Vagina (tissue), 2 donors: ENCODE measurements at regions of chr1 and their contacts with region 1.

Region 1: GRCh38 chr1:16351994-16352841 is at the start of gene FBXO42:
- DNase-seq: no peak
- H3K4me3 ChIP-seq: peak within 1 kb of the TSS; percentile 85 to 88
- H3K27ac ChIP-seq: peak within 1 kb of the TSS; percentile 94
- H3K4me1 ChIP-seq: peaks cover 37% of the 10 kb centered on the region
- H3K27me3 ChIP-seq: no peaks in the 10 kb centered on the region
- CTCF ChIP-seq: peak in 2 of 3 experiments; percentile 13 to 26
- POLR2A ChIP-seq: peak; percentile 60 to 94
- total RNA-seq, gene FBXO42: 24.8 TPM

Region 2: GRCh38 chr1:15994590-15995351 is 357.4 kb before region 1 on chr1:
- intact Hi-C with region 1: no loop called
- DNase-seq: no peak
- H3K4me3 ChIP-seq: no peak overlapping the region
- H3K27ac ChIP-seq: no peak overlapping the region
- H3K4me1 ChIP-seq: no peaks in the 10 kb centered on the region
- H3K27me3 ChIP-seq: no peaks in the 10 kb centered on the region
- CTCF ChIP-seq: peak; percentile 72 to 83 (median 77)
- POLR2A ChIP-seq: no peak

Region 3: DNA sequence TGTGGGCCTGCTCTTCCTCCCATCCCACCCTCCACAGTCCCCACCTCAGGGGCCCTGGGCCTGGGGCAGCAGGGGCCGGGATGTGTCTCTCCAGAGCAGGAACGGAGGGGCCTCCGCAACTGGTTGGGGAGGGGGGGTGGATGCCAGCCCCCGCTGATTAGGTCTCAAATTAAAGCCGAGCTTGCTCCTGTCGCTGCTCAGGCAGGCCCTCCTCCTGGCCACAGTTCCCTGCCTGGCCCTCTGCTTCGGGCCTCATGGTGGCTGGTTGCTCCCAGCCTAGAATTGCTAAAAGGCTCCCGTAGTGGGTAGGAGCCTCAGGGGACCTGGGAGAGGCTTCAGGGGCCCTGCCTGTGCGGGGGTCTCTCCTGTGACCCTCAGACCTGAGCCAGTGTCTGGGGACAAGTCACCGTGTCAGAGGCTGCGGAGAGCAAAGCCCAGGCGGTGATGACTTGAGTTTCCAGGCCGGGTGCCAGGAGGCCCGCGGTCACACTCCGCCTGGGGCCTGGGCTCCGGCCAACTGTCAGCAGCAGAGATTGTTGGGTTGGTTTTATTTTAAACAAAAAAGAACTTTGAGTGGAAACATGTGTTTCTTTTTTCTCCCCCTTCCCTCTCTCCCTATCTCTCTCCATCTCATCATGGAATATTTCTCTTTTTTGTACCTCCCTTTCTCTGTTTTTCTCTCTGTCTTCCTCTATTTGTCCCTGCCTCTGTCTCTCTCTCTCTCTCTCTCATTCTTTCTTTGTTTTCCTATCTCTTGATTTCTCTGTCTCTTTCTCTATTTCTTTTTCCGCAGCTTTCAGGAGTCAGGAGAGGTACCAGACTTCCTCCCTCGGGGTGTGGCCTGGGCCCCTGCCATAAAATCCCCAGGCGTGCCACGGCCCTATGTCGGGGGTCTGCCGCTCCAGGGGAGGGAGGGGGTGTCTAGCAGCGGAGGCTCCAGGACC is 176.3 kb before region 1 on chr1:
- intact Hi-C with region 1: no loop called
- DNase-seq: no peak
- H3K4me3 ChIP-seq: no peak overlapping the region
- H3K27ac ChIP-seq: peak overlapping the region; percentile 93
- H3K4me1 ChIP-seq: peaks cover 61% of the 10 kb centered on the region
- H3K27me3 ChIP-seq: no peaks in the 10 kb centered on the region
- CTCF ChIP-seq: no peak
- POLR2A ChIP-seq: no peak

Region 4: DNA sequence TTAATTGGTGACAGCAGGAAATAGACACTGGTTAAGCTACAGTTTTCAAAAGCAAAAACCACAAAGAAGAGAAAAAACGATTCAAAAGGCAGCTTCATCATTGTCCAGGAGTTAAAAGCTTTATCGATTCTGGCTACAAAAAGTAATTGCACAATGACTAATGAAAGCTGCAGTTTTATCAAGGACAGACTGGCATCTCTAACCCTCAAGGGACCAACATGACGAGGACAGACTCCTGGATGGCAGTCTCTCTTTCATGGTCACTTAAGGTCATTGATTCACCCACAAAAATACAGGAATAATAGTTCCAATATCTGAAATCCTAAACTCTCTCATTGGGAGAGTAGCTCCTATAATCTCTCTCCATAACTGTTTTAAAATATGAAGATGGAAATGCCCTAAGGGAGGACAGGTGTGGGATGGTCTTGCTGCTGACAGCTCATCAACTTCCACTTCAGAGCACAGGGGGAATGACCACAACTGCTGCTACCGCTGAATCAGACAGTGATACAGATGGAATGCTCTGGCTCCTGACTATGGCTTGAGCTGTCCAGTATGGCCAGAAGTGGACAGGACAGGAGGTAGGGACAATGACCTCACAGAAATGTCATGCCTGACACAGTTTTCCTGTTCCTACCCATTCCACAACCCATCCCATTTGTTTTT is 97.8 kb before region 1 on chr1:
- intact Hi-C with region 1: loop called (anchors 1 kb)
- DNase-seq: no peak
- H3K4me3 ChIP-seq: no peak overlapping the region
- H3K27ac ChIP-seq: no peak overlapping the region
- H3K4me1 ChIP-seq: peaks cover 21% of the 10 kb centered on the region
- H3K27me3 ChIP-seq: no peaks in the 10 kb centered on the region
- CTCF ChIP-seq: no peak
- POLR2A ChIP-seq: no peak